ENCODE measurements at regions of chr6 and their contacts with region 1.

Region 1: GRCh38 chr6:118283766-118284165 is 264.3 kb upstream of the PLN start:
- DNase-seq: peak; percentile 48 to 60 (median 56)
- H3K4me3 ChIP-seq: no peak overlapping the region
- H3K4me3 Mint-ChIP-seq: no peak overlapping the region
- H3K27ac ChIP-seq: no peak overlapping the region
- H3K27ac Mint-ChIP-seq: no peak overlapping the region
- H3K4me1 ChIP-seq: peaks cover 3% of the 10 kb centered on the region
- H3K4me1 Mint-ChIP-seq: peaks cover 0 to 1% (median 0%) of the 10 kb centered on the region in 4 donors
- H3K27me3 ChIP-seq: no peaks in the 10 kb centered on the region
- H3K27me3 Mint-ChIP-seq: peaks cover 5 to 7% of the 10 kb centered on the region in 2 donors

Region 2: GRCh38 chr6:117326396-117326795 is 957.4 kb before region 1 on chr6:
- CTCF ChIA-PET with region 1: no interaction called
- POLR2A ChIA-PET with region 1: no interaction called
- intact Hi-C with region 1: no loop called
- DNase-seq: no peak
- H3K4me3 ChIP-seq: no peak overlapping the region
- H3K4me3 Mint-ChIP-seq: no peak overlapping the region
- H3K27ac ChIP-seq: no peak overlapping the region
- H3K27ac Mint-ChIP-seq: no peak overlapping the region
- H3K4me1 ChIP-seq: no peaks in the 10 kb centered on the region
- H3K4me1 Mint-ChIP-seq: no peaks in the 10 kb centered on the region
- H3K27me3 ChIP-seq: no peaks in the 10 kb centered on the region
- H3K27me3 Mint-ChIP-seq: peaks cover 7 to 19% of the 10 kb centered on the region in 2 donors

Region 3: GRCh38 chr6:118097576-118097975 is 186.2 kb before region 1 on chr6:
- CTCF ChIA-PET with region 1: no interaction called
- POLR2A ChIA-PET with region 1: no interaction called
- intact Hi-C with region 1: no loop called
- DNase-seq: no peak
- H3K4me3 ChIP-seq: no peak overlapping the region
- H3K4me3 Mint-ChIP-seq: no peak overlapping the region
- H3K27ac ChIP-seq: no peak overlapping the region
- H3K27ac Mint-ChIP-seq: no peak overlapping the region
- H3K4me1 ChIP-seq: no peaks in the 10 kb centered on the region
- H3K4me1 Mint-ChIP-seq: no peaks in the 10 kb centered on the region
- H3K27me3 ChIP-seq: no peaks in the 10 kb centered on the region
- H3K27me3 Mint-ChIP-seq: peaks cover 0 to 6% of the 10 kb centered on the region in 2 donors

Region 4: GRCh38 chr6:118551063-118552053 is 267.6 kb after region 1 on chr6:
- CTCF ChIA-PET with region 1: interaction called, 5 read pairs
- POLR2A ChIA-PET with region 1: no interaction called
- intact Hi-C with region 1: loop called (anchors 1 kb)
- DNase-seq: peak in 4 of 5 donors; percentile 30 to 54 (median 41)
- H3K4me3 ChIP-seq: no peak overlapping the region
- H3K4me3 Mint-ChIP-seq: peak overlapping the region in 1 of 8 donors; percentile 57
- H3K27ac ChIP-seq: no peak overlapping the region
- H3K27ac Mint-ChIP-seq: peak overlapping the region in 3 of 7 donors; percentile 52 to 74 (median 72)
- H3K4me1 ChIP-seq: peaks cover 23% of the 10 kb centered on the region
- H3K4me1 Mint-ChIP-seq: peaks cover 18 to 37% (median 31%) of the 10 kb centered on the region in 4 donors
- H3K27me3 ChIP-seq: no peaks in the 10 kb centered on the region
- H3K27me3 Mint-ChIP-seq: no peaks in the 10 kb centered on the region

Region 5: GRCh38 chr6:118580585-118581419 is 297.0 kb after region 1 on chr6:
- CTCF ChIA-PET with region 1: interaction called, 12 read pairs
- POLR2A ChIA-PET with region 1: no interaction called
- intact Hi-C with region 1: loop called (anchors 1 kb)
- DNase-seq: peak in 4 of 5 donors; percentile 18 to 43 (median 40)
- H3K4me3 ChIP-seq: no peak overlapping the region
- H3K4me3 Mint-ChIP-seq: peak overlapping the region in 1 of 8 donors; percentile 21
- H3K27ac ChIP-seq: no peak overlapping the region
- H3K27ac Mint-ChIP-seq: peak overlapping the region; percentile 30 to 91 (median 76)
- H3K4me1 ChIP-seq: no peaks in the 10 kb centered on the region
- H3K4me1 Mint-ChIP-seq: peaks cover 7 to 20% (median 12%) of the 10 kb centered on the region in 4 donors
- H3K27me3 ChIP-seq: no peaks in the 10 kb centered on the region
- H3K27me3 Mint-ChIP-seq: no peaks in the 10 kb centered on the region

Region 6: DNA sequence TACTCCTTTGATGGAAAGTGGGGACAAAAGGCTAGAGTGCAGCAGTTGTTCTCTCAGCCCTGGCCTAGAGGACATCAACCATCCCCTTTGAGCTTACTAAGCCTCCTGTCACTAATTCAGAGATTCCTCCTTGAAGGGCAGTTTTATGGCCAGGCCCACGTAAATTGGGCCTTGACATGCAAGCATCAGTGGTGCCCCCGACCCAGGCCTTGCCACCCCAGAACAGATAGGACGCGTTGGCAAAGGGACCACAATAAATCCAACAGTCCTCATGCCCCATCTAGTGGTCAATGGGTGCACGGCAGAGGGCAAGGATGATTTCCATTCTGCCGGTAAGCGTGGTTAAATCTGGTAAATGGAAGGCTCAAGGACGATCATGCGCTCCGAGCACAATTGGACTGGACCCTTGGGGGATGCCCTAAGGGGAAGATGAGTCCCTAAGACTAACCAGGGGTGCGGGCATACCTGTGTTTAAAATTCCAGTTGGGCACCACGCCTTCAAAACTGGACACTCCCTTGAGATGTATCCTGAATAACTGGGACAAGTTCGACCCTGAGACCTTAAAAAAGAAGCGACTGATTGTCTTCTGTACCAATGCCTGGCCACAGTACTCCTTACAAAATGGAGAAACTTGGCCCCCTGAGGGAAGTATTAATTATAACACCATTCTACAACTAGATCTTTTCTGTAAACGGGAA is 335.1 kb after region 1 on chr6:
- CTCF ChIA-PET with region 1: interaction called, 3 read pairs
- POLR2A ChIA-PET with region 1: no interaction called
- intact Hi-C with region 1: loop called (anchors 1 kb)
- DNase-seq: peak; percentile 54 to 62 (median 57)
- H3K4me3 ChIP-seq: no peak overlapping the region
- H3K4me3 Mint-ChIP-seq: peak overlapping the region in 4 of 8 donors; percentile 8 to 59 (median 42)
- H3K27ac ChIP-seq: no peak overlapping the region
- H3K27ac Mint-ChIP-seq: peak overlapping the region in 6 of 7 donors; percentile 79 to 93 (median 84)
- H3K4me1 ChIP-seq: peaks cover 22% of the 10 kb centered on the region
- H3K4me1 Mint-ChIP-seq: peaks cover 41 to 72% (median 54%) of the 10 kb centered on the region in 4 donors
- H3K27me3 ChIP-seq: no peaks in the 10 kb centered on the region
- H3K27me3 Mint-ChIP-seq: no peaks in the 10 kb centered on the region

Region 7: GRCh38 chr6:118776607-118777549 is 493.1 kb after region 1 on chr6:
- CTCF ChIA-PET with region 1: no interaction called
- POLR2A ChIA-PET with region 1: no interaction called
- intact Hi-C with region 1: loop called (anchors 1 kb)
- DNase-seq: peak; percentile 63 to 73 (median 71)
- H3K4me3 ChIP-seq: no peak overlapping the region
- H3K4me3 Mint-ChIP-seq: peak overlapping the region in 6 of 8 donors; percentile 2 to 71 (median 50)
- H3K27ac ChIP-seq: no peak overlapping the region
- H3K27ac Mint-ChIP-seq: peak overlapping the region; percentile 16 to 90 (median 74)
- H3K4me1 ChIP-seq: peaks cover 21% of the 10 kb centered on the region
- H3K4me1 Mint-ChIP-seq: peaks cover 17 to 26% (median 21%) of the 10 kb centered on the region in 4 donors
- H3K27me3 ChIP-seq: no peaks in the 10 kb centered on the region
- H3K27me3 Mint-ChIP-seq: no peaks in the 10 kb centered on the region

Region 8: GRCh38 chr6:118968416-118968815 is 684.6 kb after region 1 on chr6:
- CTCF ChIA-PET with region 1: interaction called, 3 read pairs
- POLR2A ChIA-PET with region 1: no interaction called
- intact Hi-C with region 1: loop called (anchors 10 kb)
- DNase-seq: peak in 3 of 5 donors; percentile 2 to 9 (median 2)
- H3K4me3 ChIP-seq: no peak overlapping the region
- H3K4me3 Mint-ChIP-seq: no peak overlapping the region
- H3K27ac ChIP-seq: no peak overlapping the region
- H3K27ac Mint-ChIP-seq: no peak overlapping the region
- H3K4me1 ChIP-seq: no peaks in the 10 kb centered on the region
- H3K4me1 Mint-ChIP-seq: no peaks in the 10 kb centered on the region
- H3K27me3 ChIP-seq: no peaks in the 10 kb centered on the region
- H3K27me3 Mint-ChIP-seq: no peaks in the 10 kb centered on the region

Measured in CD4-positive, alpha-beta memory T cell (primary cell).